Activated CD4-positive, alpha-beta T cell treated with anti-CD3 and anti-CD28 coated beads, Interleukin-2, amount 10 ng/mL, durations not matched to agents 24 days and 14 days (primary cell): ENCODE measurements at regions of chr2 and their contacts with region 1.

Region 1: DNA sequence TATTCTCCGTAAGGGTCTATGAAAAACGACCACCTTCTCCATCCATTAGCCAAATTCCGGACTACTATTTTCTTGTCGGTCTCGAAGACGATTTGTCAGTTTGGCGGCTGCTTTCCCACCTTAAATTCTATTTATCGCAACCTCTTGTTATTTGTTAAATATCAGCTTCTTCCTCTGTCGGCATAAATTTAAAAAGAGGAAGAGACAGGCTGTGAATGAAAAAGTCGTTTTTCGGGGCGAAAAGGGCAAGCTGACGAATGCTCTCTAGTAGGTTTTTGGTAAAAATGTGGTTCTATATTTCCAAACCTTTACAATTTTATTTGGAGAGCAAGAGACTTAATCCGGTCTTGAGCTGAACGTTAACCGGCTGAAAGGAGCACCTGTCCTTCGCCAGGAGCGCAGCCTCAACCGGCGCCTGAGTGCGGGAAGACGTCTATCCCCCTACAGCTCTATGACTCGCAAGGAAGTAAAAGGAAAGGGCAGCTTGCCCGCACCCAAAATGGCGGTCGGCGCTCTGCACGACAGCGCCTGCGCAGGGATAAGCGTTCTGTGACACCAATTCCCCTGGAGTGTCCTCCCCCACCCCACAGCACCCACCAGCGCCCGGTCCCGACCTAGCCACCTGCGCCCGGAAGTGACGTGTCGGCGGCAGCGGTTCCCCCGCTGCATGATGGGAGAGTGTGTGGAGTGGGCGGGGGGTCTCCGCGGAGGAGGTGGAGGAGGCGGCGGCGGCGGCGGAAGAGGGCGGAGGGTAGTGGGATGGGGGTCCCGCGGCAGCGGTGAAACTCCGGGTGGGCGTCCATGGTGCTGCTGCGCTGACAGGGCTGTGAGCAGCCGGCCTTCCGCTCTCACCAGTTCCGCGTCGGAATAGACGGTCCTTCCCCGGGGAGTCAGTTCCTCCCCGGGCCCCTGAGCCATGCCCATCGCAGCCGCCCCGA is at the start of gene AFTPH:
- DNase-seq: peak; percentile 100
- H3K4me3 Mint-ChIP-seq: peak within 1 kb of the TSS; percentile 97
- H3K27ac Mint-ChIP-seq: peak within 1 kb of the TSS; percentile 100
- H3K4me1 Mint-ChIP-seq: peaks cover 40% of the 10 kb centered on the region
- H3K27me3 Mint-ChIP-seq: peaks cover 8% of the 10 kb centered on the region
- total RNA-seq, gene AFTPH: 39.1 and 39.6 TPM in 2 replicates

Region 2: GRCh38 chr2:64144057-64145013 is 379.6 kb before region 1 on chr2 and contains the start of gene PELI1:
- intact Hi-C with region 1: loop called (anchors 1 kb)
- DNase-seq: peak; percentile 97
- H3K4me3 Mint-ChIP-seq: peak within 1 kb of the TSS; percentile 99
- H3K27ac Mint-ChIP-seq: peak within 1 kb of the TSS; percentile 96
- H3K4me1 Mint-ChIP-seq: peaks cover 19% of the 10 kb centered on the region
- H3K27me3 Mint-ChIP-seq: no peaks in the 10 kb centered on the region
- total RNA-seq, gene PELI1: 31.9 and 33.8 TPM in 2 replicates

Region 3: DNA sequence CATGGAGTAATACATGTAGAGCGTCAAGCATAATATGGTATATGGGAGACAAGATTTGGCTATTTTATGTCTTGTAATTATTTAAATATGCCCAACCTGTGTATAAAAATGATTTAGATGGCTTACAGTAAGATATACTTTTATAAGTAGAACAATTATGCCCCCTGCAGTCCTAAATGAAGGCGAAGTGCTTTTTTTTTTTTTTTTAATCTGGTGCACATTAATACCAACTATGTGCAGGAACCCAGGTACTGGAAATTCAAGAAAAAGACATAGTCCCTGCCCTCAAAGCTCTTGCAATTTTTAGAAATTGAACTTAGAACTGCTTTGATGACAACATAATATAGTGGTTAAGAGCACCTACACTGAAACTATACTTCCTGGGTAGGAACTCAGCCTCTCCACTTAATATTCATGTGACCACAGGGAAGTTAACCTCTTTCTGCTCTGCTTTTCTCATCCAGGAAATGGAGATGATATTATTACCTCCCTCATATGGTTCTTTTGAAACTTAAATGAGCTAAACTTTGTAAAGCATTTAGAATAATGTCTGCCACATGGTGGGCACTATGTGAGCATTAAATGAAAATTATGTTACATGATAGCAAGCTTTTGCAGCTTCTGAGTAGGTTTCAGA is 38.3 kb after region 1 on chr2:
- intact Hi-C with region 1: loop called (anchors 1 kb)
- DNase-seq: no peak
- H3K4me3 Mint-ChIP-seq: no peak overlapping the region
- H3K27ac Mint-ChIP-seq: no peak overlapping the region
- H3K4me1 Mint-ChIP-seq: peaks cover 30% of the 10 kb centered on the region
- H3K27me3 Mint-ChIP-seq: no peaks in the 10 kb centered on the region

Region 4: GRCh38 chr2:64698668-64699444 is 174.9 kb after region 1 on chr2:
- intact Hi-C with region 1: loop called (anchors 1 kb)
- DNase-seq: peak; percentile 64
- H3K4me3 Mint-ChIP-seq: peak overlapping the region; percentile 66
- H3K27ac Mint-ChIP-seq: peak overlapping the region; percentile 90
- H3K4me1 Mint-ChIP-seq: peaks cover 54% of the 10 kb centered on the region
- H3K27me3 Mint-ChIP-seq: no peaks in the 10 kb centered on the region

Region 5: DNA sequence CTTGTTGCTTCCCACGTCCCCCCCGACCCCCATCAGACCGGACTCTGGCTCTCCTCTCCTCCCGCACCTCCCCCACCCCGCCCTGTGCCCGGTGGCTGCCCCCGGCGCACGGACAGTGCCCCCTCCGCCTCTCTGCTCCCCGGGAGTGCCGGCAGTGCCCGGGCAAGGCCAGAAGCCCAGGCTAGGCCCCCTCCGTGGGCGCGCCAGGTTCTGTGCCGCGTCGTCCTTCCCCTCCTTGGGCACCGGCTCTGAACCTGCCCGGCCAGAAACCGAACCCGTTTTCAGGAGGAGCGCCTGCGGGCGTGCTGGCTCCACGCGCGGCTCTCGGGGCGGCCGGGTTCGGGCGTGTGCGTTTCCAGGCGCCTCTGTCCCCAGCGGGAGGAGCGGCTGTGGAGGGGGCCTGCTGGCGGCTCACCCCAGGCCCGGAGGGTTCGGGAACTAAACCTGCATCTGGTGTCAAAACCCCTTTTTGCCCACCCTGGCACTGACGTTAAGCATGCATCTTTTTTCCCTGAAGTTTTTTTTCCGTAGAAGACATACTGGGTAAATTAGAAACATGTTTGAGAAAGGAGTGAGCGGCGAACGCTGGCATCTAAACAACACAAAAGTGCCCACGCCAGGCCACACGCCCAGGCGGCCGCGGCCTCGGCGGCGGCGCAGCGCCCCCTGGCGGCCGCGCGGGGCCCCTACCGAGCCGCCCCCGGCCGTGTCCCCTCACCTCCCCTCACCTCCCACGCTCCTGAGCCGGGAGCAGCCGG is 341.3 kb after region 1 on chr2:
- intact Hi-C with region 1: loop called (anchors 1 kb)
- DNase-seq: peak; percentile 91
- H3K4me3 Mint-ChIP-seq: peak overlapping the region; percentile 73
- H3K27ac Mint-ChIP-seq: no peak overlapping the region
- H3K4me1 Mint-ChIP-seq: peaks cover 3% of the 10 kb centered on the region
- H3K27me3 Mint-ChIP-seq: peaks cover 14% of the 10 kb centered on the region

Region 6: GRCh38 chr2:65129826-65130663 is 606.1 kb after region 1 on chr2 and contains the start of gene RAB1A:
- intact Hi-C with region 1: loop called (anchors 1 kb)
- DNase-seq: peak; percentile 99
- H3K4me3 Mint-ChIP-seq: peak within 1 kb of the TSS; percentile 95
- H3K27ac Mint-ChIP-seq: peak within 1 kb of the TSS; percentile 98
- H3K4me1 Mint-ChIP-seq: peaks cover 24% of the 10 kb centered on the region
- H3K27me3 Mint-ChIP-seq: peaks cover 3% of the 10 kb centered on the region
- total RNA-seq, gene RAB1A: 79.9 and 81.1 TPM in 2 replicates